Activated CD8-positive, alpha-beta T cell treated with anti-CD3 and anti-CD28 coated beads for 36 hours (primary cell): ENCODE measurements at regions of chr17 and their contacts with region 1.

Region 1: GRCh38 chr17:8057691-8058114 is 18.8 kb downstream of the ALOX15B start:
- DNase-seq: peak; percentile 60
- ATAC-seq: peak; percentile 80
- H3K4me3 Mint-ChIP-seq: no peak overlapping the region
- H3K27ac Mint-ChIP-seq: no peak overlapping the region
- H3K4me1 Mint-ChIP-seq: peaks cover 15% of the 10 kb centered on the region
- H3K27me3 Mint-ChIP-seq: peaks cover 39% of the 10 kb centered on the region
- CTCF ChIP-seq: peak; percentile 74

Region 2: DNA sequence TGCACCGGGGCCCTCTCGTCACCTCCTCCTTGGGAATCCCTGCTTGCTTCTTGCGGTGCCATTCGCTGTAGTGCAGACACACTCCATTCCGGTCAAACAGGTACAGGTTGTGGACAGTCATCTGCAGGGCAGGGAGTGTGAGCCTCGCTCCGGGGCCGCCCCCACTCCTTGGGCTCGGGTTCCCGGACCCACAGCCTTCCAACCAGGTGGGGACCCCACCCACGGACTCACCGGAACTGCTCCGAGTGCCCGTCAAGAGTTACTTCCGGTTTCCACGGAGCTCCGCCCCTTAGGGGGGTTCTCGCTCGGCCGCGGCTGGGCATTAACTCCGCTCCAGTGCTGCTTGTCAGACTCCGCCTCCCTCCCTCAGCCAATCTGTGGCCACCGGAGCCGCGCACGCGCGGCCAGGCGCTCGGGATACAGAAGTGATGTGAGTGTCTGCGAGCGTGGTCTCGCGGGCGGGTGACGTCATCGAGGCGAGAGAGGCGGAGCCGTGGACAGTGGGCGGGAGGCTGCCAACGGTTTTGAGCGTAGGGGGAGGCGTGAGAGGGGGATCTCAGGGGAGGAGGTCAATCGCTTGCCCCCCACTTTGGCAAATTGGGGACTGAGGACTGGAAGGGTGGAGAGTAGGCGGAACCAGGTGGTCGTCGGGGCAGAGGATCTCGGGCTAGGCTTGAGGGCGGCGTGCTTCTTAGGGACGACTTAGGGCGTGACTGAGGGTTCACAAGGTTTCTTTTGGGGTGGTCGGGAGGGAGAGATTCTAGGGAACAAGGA is 125.8 kb before region 1 on chr17 and contains the starts of genes CNTROB and TRAPPC1:
- CTCF ChIA-PET with region 1: interaction called, 12 read pairs
- POLR2A ChIA-PET with region 1: no interaction called
- intact Hi-C with region 1: no loop called
- DNase-seq: peak; percentile 99
- ATAC-seq: peak; percentile 99
- H3K4me3 Mint-ChIP-seq: peak within 1 kb of the TSS; percentile 87
- H3K27ac Mint-ChIP-seq: peak within 1 kb of the TSS; percentile 94
- H3K4me1 Mint-ChIP-seq: peaks cover 40% of the 10 kb centered on the region
- H3K27me3 Mint-ChIP-seq: no peaks in the 10 kb centered on the region
- CTCF ChIP-seq: no peak
- total RNA-seq, gene CNTROB: 48.4 to 54.1 TPM
- total RNA-seq, gene TRAPPC1: 140 to 143 TPM

Region 3: DNA sequence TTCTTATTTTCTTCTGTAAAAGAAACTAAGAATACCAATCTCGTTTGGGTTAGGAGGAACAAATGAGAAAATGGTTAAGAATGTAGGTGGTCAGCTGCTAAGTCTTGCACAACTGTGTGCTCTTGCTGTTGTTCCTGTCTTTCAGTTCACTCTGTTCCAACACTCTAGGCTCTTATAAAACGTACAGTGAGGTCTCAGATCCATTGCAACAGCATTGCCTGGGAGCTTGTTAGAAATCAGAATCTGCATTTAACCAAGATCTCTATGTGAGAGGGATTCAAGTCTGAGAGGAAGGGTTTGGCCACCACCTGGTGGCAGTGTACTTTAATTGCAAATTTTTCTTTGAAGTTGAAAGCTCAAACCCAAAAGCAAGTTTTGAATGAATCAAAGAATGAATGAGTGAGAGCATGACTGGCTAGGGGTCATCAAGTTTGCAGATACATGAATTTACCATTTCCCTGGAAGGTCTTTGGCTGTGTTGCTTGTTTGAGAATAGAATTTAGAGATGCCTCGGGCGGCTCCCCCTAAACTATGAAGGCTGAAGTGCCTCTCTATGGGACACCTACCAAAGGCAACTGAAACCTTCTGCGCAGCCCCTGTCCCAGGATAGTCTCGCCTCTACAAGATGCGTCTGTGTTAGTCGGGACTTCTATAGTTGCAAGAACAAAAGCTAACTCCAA is 16.3 kb before region 1 on chr17:
- CTCF ChIA-PET with region 1: interaction called, 35 read pairs
- POLR2A ChIA-PET with region 1: interaction called, 4 read pairs
- intact Hi-C with region 1: no loop called
- DNase-seq: peak; percentile 68
- ATAC-seq: peak; percentile 67
- H3K4me3 Mint-ChIP-seq: no peak overlapping the region
- H3K27ac Mint-ChIP-seq: no peak overlapping the region
- H3K4me1 Mint-ChIP-seq: peaks cover 4% of the 10 kb centered on the region
- H3K27me3 Mint-ChIP-seq: peaks cover 18% of the 10 kb centered on the region
- CTCF ChIP-seq: peak; percentile 72

Region 4: GRCh38 chr17:8079291-8080207 is 21.8 kb after region 1 on chr17:
- CTCF ChIA-PET with region 1: interaction called, 360 read pairs
- POLR2A ChIA-PET with region 1: interaction called, 3 read pairs
- intact Hi-C with region 1: no loop called
- DNase-seq: peak; percentile 93
- ATAC-seq: peak; percentile 94
- H3K4me3 Mint-ChIP-seq: peak overlapping the region; percentile 96
- H3K27ac Mint-ChIP-seq: peak overlapping the region; percentile 93
- H3K4me1 Mint-ChIP-seq: peaks cover 11% of the 10 kb centered on the region
- H3K27me3 Mint-ChIP-seq: peaks cover 5% of the 10 kb centered on the region
- CTCF ChIP-seq: peak; percentile 87

Region 5: GRCh38 chr17:8103549-8103948 is 45.8 kb after region 1 on chr17:
- CTCF ChIA-PET with region 1: interaction called, 93 read pairs
- POLR2A ChIA-PET with region 1: no interaction called
- intact Hi-C with region 1: no loop called
- DNase-seq: no peak
- ATAC-seq: no peak
- H3K4me3 Mint-ChIP-seq: no peak overlapping the region
- H3K27ac Mint-ChIP-seq: no peak overlapping the region
- H3K4me1 Mint-ChIP-seq: no peaks in the 10 kb centered on the region
- H3K27me3 Mint-ChIP-seq: no peaks in the 10 kb centered on the region
- CTCF ChIP-seq: no peak

Region 6: GRCh38 chr17:8118769-8119580 is 61.3 kb after region 1 on chr17:
- CTCF ChIA-PET with region 1: interaction called, 93 read pairs
- POLR2A ChIA-PET with region 1: interaction called, 6 read pairs
- intact Hi-C with region 1: loop called (anchors 5 kb)
- DNase-seq: peak; percentile 95
- ATAC-seq: peak; percentile 57
- H3K4me3 Mint-ChIP-seq: peak overlapping the region; percentile 97
- H3K27ac Mint-ChIP-seq: peak overlapping the region; percentile 95
- H3K4me1 Mint-ChIP-seq: peaks cover 35% of the 10 kb centered on the region
- H3K27me3 Mint-ChIP-seq: peaks cover 43% of the 10 kb centered on the region
- CTCF ChIP-seq: peak; percentile 94